ENCODE measurements at regions of chr7 and their contacts with region 1.

Region 1: DNA sequence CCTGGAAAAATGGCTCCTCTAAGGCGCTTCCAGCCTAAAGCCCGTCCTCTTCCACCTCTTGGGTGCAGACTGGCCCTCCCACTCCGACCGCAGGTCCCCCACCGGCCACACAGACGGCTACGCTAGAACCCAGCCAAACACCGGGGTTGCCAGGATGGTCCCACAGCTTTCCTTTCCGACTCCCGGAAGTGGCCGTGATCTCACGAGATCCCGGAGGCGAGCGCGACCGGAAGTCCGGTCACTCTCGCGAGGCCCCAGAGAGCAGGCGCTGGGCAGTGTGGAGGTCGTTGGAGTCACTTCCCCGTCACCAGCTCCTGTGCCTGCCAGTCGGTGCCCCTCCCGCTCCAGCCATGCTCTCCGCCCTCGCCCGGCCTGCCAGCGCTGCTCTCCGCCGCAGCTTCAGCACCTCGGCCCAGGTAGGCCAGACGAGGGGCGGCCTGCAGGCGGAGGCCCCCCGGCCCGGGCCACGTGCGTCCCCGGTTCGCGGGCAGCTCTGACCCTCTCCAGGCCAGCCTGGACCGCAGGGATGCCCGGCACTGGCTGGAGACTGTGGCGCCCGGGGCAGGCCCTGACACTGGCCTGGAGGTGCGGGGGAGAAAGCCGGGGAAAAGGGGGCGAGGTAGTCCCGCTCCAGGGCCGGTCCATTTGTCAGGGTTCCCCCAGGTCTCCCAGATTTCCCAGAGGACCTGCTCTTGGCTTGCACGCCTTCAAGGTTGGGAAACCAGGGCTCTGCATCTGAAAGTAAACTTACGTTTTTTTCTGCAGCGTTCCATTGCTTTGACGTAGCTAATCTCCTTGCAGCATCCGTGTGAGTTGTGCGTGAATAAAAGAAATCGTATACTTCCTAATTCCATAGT is at the starts of genes MDH2 and STYXL1:
- DNase-seq: peak; percentile 81 to 93
- H3K4me3 ChIP-seq: peak within 1 kb of the TSS; percentile 94 to 97 (median 96)
- H3K27ac ChIP-seq: peak within 1 kb of the TSS; percentile 79
- H3K4me1 ChIP-seq: peaks cover 0 to 4% (median 3%) of the 10 kb centered on the region in 4 experiments; a peak in 6 of 7 replicates
- H3K27me3 ChIP-seq: no peaks in the 10 kb centered on the region
- CTCF ChIP-seq: peak in 1 of 3 experiments; percentile 2; a peak in 1 of 4 replicates
- EP300 ChIP-seq: no peak
- POLR2A ChIP-seq: peak; percentile 95
- RAD21 ChIP-seq: no peak
- total RNA-seq, gene MDH2: 254 TPM in 2 replicates
- total RNA-seq, gene STYXL1: 26.4 and 32.3 TPM in 2 replicates

Region 2: GRCh38 chr7:76031964-76032363 is 16.1 kb before region 1 on chr7:
- CTCF ChIA-PET with region 1: interaction called, 15 read pairs
- POLR2A ChIA-PET with region 1: interaction called, 17 read pairs
- DNase-seq: no peak
- H3K4me3 ChIP-seq: no peak overlapping the region
- H3K27ac ChIP-seq: no peak overlapping the region
- H3K4me1 ChIP-seq: no peaks in the 10 kb centered on the region
- H3K27me3 ChIP-seq: no peaks in the 10 kb centered on the region
- CTCF ChIP-seq: no peak
- EP300 ChIP-seq: no peak
- POLR2A ChIP-seq: no peak
- RAD21 ChIP-seq: no peak

Region 3: GRCh38 chr7:76037310-76037709 is 10.7 kb before region 1 on chr7:
- CTCF ChIA-PET with region 1: interaction called, 5 read pairs
- POLR2A ChIA-PET with region 1: interaction called, 17 read pairs
- DNase-seq: no peak
- H3K4me3 ChIP-seq: no peak overlapping the region
- H3K27ac ChIP-seq: no peak overlapping the region; the same call in 1 of the 2 replicates
- H3K4me1 ChIP-seq: no peaks in the 10 kb centered on the region
- H3K27me3 ChIP-seq: no peaks in the 10 kb centered on the region
- CTCF ChIP-seq: no peak
- EP300 ChIP-seq: no peak
- POLR2A ChIP-seq: no peak
- RAD21 ChIP-seq: no peak

Region 4: GRCh38 chr7:76060842-76061241 is 12.8 kb after region 1 on chr7:
- CTCF ChIA-PET with region 1: no interaction called
- POLR2A ChIA-PET with region 1: interaction called, 127 read pairs
- DNase-seq: no peak
- H3K4me3 ChIP-seq: no peak overlapping the region
- H3K27ac ChIP-seq: no peak overlapping the region
- H3K4me1 ChIP-seq: no peaks in the 10 kb centered on the region
- H3K27me3 ChIP-seq: no peaks in the 10 kb centered on the region
- CTCF ChIP-seq: no peak
- EP300 ChIP-seq: no peak
- POLR2A ChIP-seq: no peak
- RAD21 ChIP-seq: no peak

Region 5: DNA sequence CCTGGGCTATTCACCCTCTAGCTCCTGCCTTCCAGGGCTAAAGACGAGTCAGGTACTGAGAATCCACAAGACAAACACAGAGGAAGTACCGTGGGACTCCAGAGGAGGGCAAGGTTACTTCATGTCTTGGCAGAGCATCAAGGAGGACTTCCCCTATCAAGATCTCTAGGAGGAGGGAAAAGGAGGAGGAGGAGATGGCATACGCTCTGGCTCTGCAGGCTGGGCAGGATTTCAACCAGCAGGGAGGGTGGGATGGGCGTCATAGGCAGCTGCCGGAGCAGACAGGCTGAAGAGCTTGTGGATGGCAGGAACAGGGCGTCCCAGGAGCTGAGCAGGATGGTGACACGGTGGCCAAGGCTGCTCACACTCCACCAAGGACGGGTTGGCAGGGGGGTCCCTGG is 21.2 kb after region 1 on chr7:
- CTCF ChIA-PET with region 1: interaction called, 15 read pairs
- POLR2A ChIA-PET with region 1: interaction called, 127 read pairs
- DNase-seq: peak in 1 of 2 experiments; percentile 46
- H3K4me3 ChIP-seq: no peak overlapping the region
- H3K27ac ChIP-seq: no peak overlapping the region
- H3K4me1 ChIP-seq: peaks cover 0 to 3% (median 1%) of the 10 kb centered on the region in 4 experiments; a peak in 5 of 7 replicates
- H3K27me3 ChIP-seq: no peaks in the 10 kb centered on the region
- CTCF ChIP-seq: peak; percentile 32 to 69 (median 67)
- EP300 ChIP-seq: no peak
- POLR2A ChIP-seq: no peak
- RAD21 ChIP-seq: peak; percentile 84